Left ventricle myocardium superior (tissue), 1 donor: ENCODE measurements at regions of chr19 and their contacts with region 1.

Region 1: DNA sequence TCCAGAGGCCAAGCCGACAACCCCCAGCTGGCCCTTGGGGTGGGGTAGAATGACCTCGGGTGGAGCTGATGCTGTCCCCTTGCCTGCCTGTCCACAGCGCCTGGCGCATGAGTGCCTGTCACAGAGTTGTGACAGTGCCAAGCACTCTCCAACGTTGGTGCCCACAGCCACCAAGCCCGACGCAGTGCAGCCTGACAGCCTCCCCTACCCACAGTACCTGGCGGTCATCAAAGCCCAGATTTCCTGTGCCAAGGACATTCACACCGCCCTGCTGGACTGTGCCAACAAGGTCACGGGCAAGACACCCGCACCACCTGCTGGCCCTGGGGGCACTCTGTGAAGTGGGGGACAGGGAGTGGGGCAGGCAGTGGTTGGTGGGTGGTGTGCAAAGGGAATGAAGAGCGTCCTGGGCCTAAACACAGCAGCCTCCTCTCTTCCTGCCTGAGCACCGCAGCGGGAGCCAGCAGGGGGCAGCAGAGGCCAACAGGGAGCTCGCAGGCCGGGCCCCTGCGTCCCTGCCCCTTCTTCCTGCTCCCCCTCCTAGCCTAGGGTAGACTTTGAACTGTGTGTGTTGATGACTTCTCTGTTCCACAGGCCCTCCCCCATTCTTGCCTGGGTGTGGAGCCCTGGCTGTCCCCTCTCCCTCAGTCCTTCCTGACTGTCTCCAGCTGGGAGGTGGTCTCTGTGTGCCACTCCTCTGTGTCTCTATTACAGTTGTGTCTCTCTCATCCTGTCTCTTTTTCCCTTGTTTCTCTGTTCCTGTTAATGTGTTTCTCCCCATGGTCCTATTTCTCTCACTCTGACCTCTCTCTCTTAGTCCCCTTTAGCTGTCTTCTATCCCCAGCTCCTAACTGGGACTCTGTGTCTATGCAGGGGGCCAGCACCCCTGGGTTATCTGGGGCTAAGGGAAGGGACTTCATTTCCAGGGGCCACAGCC is 6.5 kb downstream of the MED29 start:
- DNase-seq: peak; percentile 95
- ATAC-seq: peak; percentile 78

Region 2: GRCh38 chr19:39328046-39328705 is 69.5 kb before region 1 on chr19:
- intact Hi-C with region 1: no loop called
- DNase-seq: peak; percentile 90
- ATAC-seq: peak; percentile 84

Region 3: GRCh38 chr19:39411832-39412099 is 14.1 kb after region 1 on chr19:
- intact Hi-C with region 1: loop called (anchors 2 kb)
- DNase-seq: peak; percentile 94
- ATAC-seq: peak; percentile 39